Activated T-helper 1 cell treated with anti-CD3 and anti-CD28 coated beads, Interleukin-12 subunit alpha, Interleukin-12 subunit beta, Interleukin-2, Interleukin-4 antibody, amounts not matched to agents 30 ng/mL and 10 ng/mL and 1 ng/mL, durations not matched to agents 14 hours and 24 hours and 36 hours (primary cell): ENCODE measurements at regions of chr19 and their contacts with region 1.

Region 1: GRCh38 chr19:12666265-12667048 is at the starts of genes MAN2B1 and WDR83:
- DNase-seq: peak; percentile 77
- H3K4me3 Mint-ChIP-seq: peak within 1 kb of the TSS; percentile 95
- H3K27ac Mint-ChIP-seq: peak within 1 kb of the TSS; percentile 98
- H3K4me1 Mint-ChIP-seq: peaks cover 47% of the 10 kb centered on the region
- H3K27me3 Mint-ChIP-seq: no peaks in the 10 kb centered on the region
- total RNA-seq, gene MAN2B1: 132 and 143 TPM in 2 replicates
- total RNA-seq, gene WDR83: 25.6 and 27.1 TPM in 2 replicates

Region 2: DNA sequence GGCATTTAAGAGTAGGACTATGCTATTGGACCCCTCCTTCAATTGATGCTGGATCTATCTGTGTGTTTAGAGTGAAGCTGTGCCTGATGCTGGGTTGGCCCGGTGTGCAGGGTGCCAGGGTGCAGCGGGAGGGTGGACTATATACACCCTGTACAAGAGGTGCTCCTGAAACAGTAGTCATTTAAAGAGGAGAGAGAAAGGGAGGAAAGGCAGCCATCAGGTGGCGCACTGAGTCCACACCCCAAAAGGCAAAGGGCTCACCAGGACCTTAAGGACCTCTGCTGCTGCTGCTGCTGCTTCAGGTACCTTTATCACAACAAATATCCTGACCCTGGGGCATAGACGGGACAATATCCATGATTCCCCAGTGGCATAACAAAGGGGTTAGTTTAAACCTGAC is 464.2 kb before region 1 on chr19:
- intact Hi-C with region 1: loop called (anchors 5 kb)
- DNase-seq: peak; percentile 13
- H3K4me3 Mint-ChIP-seq: no peak overlapping the region
- H3K27ac Mint-ChIP-seq: no peak overlapping the region
- H3K4me1 Mint-ChIP-seq: no peaks in the 10 kb centered on the region
- H3K27me3 Mint-ChIP-seq: no peaks in the 10 kb centered on the region

Region 3: GRCh38 chr19:12551060-12551832 is 115.2 kb before region 1 on chr19 and contains the start of gene ZNF564:
- intact Hi-C with region 1: loop called (anchors 1 kb)
- DNase-seq: peak; percentile 92
- H3K4me3 Mint-ChIP-seq: peak within 1 kb of the TSS; percentile 95
- H3K27ac Mint-ChIP-seq: peak within 1 kb of the TSS; percentile 91
- H3K4me1 Mint-ChIP-seq: peaks cover 20% of the 10 kb centered on the region
- H3K27me3 Mint-ChIP-seq: no peaks in the 10 kb centered on the region
- total RNA-seq, gene ZNF564: 7.4 and 8.3 TPM in 2 replicates

Region 4: GRCh38 chr19:12610540-12611360 is 55.7 kb before region 1 on chr19 and contains the starts of genes ZNF490 and ZNF791:
- intact Hi-C with region 1: loop called (anchors 1 kb)
- DNase-seq: peak; percentile 96
- H3K4me3 Mint-ChIP-seq: peak within 1 kb of the TSS; percentile 100
- H3K27ac Mint-ChIP-seq: peak within 1 kb of the TSS; percentile 99
- H3K4me1 Mint-ChIP-seq: peaks cover 22% of the 10 kb centered on the region
- H3K27me3 Mint-ChIP-seq: no peaks in the 10 kb centered on the region
- total RNA-seq, gene ZNF490: 9.2 and 9.4 TPM in 2 replicates
- total RNA-seq, gene ZNF791: 23.5 and 29.0 TPM in 2 replicates

Region 5: GRCh38 chr19:12681074-12681951 is 14.9 kb after region 1 on chr19 and contains the start of gene DHPS:
- intact Hi-C with region 1: loop called (anchors 1 kb)
- DNase-seq: peak; percentile 89
- H3K4me3 Mint-ChIP-seq: peak within 1 kb of the TSS; percentile 86
- H3K27ac Mint-ChIP-seq: peak within 1 kb of the TSS; percentile 88
- H3K4me1 Mint-ChIP-seq: peaks cover 12% of the 10 kb centered on the region
- H3K27me3 Mint-ChIP-seq: no peaks in the 10 kb centered on the region
- total RNA-seq, gene DHPS: 144 and 147 TPM in 2 replicates